K562 (cell line): ENCODE measurements at regions of chr2 and their contacts with region 1.

Region 1: GRCh38 chr2:10526281-10527000 is 78.3 kb upstream of the ODC1 start:
- DNase-seq: no peak
- ATAC-seq: no peak
- H3K4me3 ChIP-seq: no peak overlapping the region
- H3K27ac ChIP-seq: no peak overlapping the region
- H3K4me1 ChIP-seq: peaks cover 10 to 31% of the 10 kb centered on the region in 2 experiments; a peak in 4 of 5 replicates
- H3K27me3 ChIP-seq: peaks cover 4 to 9% of the 10 kb centered on the region in 2 experiments; a peak in 3 of 5 replicates
- CTCF ChIP-seq: no peak
- EP300 ChIP-seq: no peak
- POLR2A ChIP-seq: no peak
- RAD21 ChIP-seq: no peak

Region 2: DNA sequence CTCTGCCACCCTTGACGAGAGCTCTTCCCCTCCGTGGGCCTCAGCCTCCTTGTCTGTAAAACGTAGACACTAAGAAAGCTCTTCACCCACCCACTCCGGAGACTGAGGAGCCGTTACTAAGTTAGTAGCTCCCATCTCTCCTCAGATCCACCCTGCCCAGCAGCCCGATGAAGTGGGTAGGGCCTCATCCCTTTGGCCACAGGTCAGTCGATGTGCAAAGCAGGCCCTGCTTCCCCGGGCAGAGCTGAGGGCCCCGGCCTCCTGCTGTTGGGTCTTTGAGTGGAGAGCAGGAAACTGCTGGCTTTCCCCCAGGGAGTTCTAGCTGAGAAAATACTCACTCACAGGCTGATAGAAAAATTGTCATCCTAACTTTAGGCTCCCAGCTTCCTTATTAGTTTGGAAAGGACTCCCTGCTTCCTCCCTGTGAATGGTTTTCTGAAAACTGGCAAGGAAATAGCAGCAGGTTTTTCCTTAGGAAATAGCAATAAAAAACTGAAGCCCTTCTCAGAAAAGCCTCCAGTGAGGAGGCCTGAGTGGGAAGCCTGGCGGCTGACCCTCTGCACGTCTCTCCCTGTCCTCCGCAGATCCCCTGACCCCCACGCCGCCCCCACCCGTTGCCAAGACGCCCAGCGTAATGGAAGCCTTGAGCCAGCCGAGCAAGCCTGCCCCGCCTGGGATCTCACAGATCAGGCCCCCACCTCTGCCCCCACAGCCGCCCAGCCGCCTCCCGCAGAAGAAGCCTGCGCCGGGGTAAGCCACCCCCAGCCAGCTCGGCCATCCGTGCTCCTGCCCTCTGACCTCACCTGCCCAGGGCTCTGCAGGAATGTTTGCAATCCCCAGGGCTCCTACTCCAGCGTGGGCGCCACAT is 1133.3 kb before region 1 on chr2:
- CTCF ChIA-PET with region 1: no interaction called
- POLR2A ChIA-PET with region 1: no interaction called
- in situ Hi-C with region 1: no loop called
- intact Hi-C with region 1: no loop called
- DNase-seq: no peak
- ATAC-seq: no peak
- H3K4me3 ChIP-seq: no peak overlapping the region
- H3K27ac ChIP-seq: no peak overlapping the region
- H3K4me1 ChIP-seq: peaks cover 0 to 13% of the 10 kb centered on the region in 2 experiments; a peak in 2 of 5 replicates
- H3K27me3 ChIP-seq: no peaks in the 10 kb centered on the region
- CTCF ChIP-seq: no peak
- EP300 ChIP-seq: no peak
- POLR2A ChIP-seq: no peak
- RAD21 ChIP-seq: no peak

Region 3: GRCh38 chr2:10493636-10494281 is 32.7 kb before region 1 on chr2:
- CTCF ChIA-PET with region 1: no interaction called
- POLR2A ChIA-PET with region 1: no interaction called
- in situ Hi-C with region 1: no loop called
- intact Hi-C with region 1: loop called (anchors 5 kb)
- DNase-seq: no peak
- ATAC-seq: no peak
- H3K4me3 ChIP-seq: no peak overlapping the region
- H3K27ac ChIP-seq: no peak overlapping the region
- H3K4me1 ChIP-seq: peaks cover 6 to 22% of the 10 kb centered on the region in 2 experiments; a peak in 4 of 5 replicates
- H3K27me3 ChIP-seq: peaks cover 54 to 64% of the 10 kb centered on the region in 2 experiments
- CTCF ChIP-seq: no peak
- EP300 ChIP-seq: no peak
- POLR2A ChIP-seq: no peak
- RAD21 ChIP-seq: no peak

Region 4: GRCh38 chr2:10787176-10787968 is 260.9 kb after region 1 on chr2:
- CTCF ChIA-PET with region 1: no interaction called
- POLR2A ChIA-PET with region 1: no interaction called
- in situ Hi-C with region 1: no loop called
- intact Hi-C with region 1: no loop called
- DNase-seq: peak in 2 of 4 experiments; percentile 39 to 46
- ATAC-seq: peak; percentile 76
- H3K4me3 ChIP-seq: no peak overlapping the region
- H3K27ac ChIP-seq: no peak overlapping the region
- H3K4me1 ChIP-seq: no peaks in the 10 kb centered on the region
- H3K27me3 ChIP-seq: no peaks in the 10 kb centered on the region
- CTCF ChIP-seq: peak; percentile 36 to 57 (median 49); a peak in 4 of 6 replicates
- EP300 ChIP-seq: no peak
- POLR2A ChIP-seq: no peak
- RAD21 ChIP-seq: peak in 1 of 2 experiments; percentile 29; a peak in 1 of 4 replicates